Calu3 (cell line): ENCODE measurements at regions of chr13 and their contacts with region 1.

Region 1: DNA sequence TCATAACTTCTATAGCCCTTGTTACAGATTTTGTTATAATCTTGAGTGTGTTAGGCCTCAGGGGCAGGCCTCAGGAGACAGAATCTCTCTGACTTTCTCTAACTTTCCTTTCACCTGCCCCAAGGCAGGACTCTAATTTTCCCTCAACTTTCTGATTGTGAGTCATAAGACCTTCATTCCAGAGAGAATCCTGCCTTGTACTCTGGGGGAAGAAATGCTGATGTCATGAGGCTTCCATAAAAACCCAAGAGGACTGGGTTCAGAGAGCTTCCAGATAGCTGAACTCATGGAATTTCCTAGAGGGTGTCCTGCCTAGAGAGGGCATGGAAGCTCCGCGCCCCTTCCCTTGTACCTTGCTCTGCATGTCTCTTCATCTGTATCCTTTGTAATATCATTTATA is 5.3 kb upstream of the KBTBD6 start:
- DNase-seq: no peak
- H3K4me3 Mint-ChIP-seq: no peak overlapping the region
- H3K27ac Mint-ChIP-seq: no peak overlapping the region
- H3K4me1 Mint-ChIP-seq: peaks cover 51% of the 10 kb centered on the region
- H3K27me3 Mint-ChIP-seq: no peaks in the 10 kb centered on the region
- CTCF ChIP-seq: no peak

Region 2: GRCh38 chr13:41186481-41186880 is 48.5 kb after region 1 on chr13:
- CTCF ChIA-PET with region 1: no interaction called
- intact Hi-C with region 1: loop called (anchors 2 kb)
- DNase-seq: no peak
- H3K4me3 Mint-ChIP-seq: no peak overlapping the region
- H3K27ac Mint-ChIP-seq: no peak overlapping the region
- H3K4me1 Mint-ChIP-seq: peaks cover 7% of the 10 kb centered on the region
- H3K27me3 Mint-ChIP-seq: no peaks in the 10 kb centered on the region
- CTCF ChIP-seq: no peak